Heart right ventricle (tissue), 16 donors: ENCODE measurements at regions of chr13 and their contacts with region 1.

Region 1: GRCh38 chr13:110915057-110915873 is at the start of gene ANKRD10:
- DNase-seq: peak; percentile 98 to 99
- ATAC-seq: peak; percentile 91 to 97 (median 93)
- H3K4me3 ChIP-seq: peak within 1 kb of the TSS; percentile 71 to 99 (median 92)
- H3K27ac ChIP-seq: peak within 1 kb of the TSS; percentile 97 to 100 (median 100)
- H3K4me1 ChIP-seq: peaks cover 6 to 57% (median 48%) of the 10 kb centered on the region in 9 donors
- H3K27me3 ChIP-seq: no peaks in the 10 kb centered on the region
- CTCF ChIP-seq: peak in 8 of 9 donors; percentile 80 to 100 (median 92)
- total RNA-seq, gene ANKRD10: 38.1 to 71.4 (median 49.0) TPM

Region 2: DNA sequence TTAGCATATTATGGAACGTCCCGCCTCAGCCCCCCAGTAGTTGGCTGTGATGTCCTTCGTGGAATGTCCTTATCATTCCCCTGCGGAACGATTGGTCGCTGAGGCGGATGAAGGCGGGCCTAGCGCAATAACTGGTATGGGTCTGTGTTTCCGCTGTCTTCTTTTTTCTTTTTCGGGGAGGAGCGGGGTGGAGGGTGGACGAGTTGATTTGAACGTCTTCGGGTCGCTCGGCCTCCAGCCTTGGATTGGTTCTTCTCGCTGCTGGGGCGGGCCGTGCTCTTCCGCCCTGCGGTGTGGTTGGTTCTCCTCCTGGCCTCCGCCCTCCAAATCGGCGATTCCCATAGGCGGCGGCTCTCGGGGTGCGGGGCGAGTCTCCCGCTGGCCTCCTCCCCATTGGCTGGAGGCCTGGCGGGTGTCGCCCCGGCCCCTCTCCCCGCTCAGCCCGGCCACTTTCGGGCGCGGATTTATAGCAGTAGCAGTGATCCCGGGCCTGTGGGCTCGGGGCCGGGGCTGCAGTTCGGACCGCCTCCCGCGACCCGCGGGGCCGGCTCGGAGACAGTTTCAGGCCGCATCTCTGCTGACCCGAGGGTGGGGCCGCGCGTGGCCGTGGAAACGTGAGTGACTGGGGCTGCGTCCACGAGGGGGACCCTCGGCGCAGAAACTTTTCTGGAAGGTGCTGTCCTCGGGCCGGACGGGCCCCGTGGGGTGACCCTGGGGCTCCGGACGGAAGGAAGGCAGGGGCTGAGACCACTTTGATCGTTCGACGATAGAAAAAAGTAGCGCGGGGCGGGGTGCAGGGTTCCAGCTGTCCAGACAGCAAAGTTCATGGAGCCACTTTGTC is 199.7 kb before region 1 on chr13:
- intact Hi-C with region 1: loop called in 7 of 10 experiments (anchors 2 to 10 kb)
- DNase-seq: peak; percentile 97 to 99
- ATAC-seq: peak; percentile 68 to 84 (median 81)
- H3K4me3 ChIP-seq: peak overlapping the region; percentile 79 to 98 (median 92)
- H3K27ac ChIP-seq: peak overlapping the region; percentile 17 to 100 (median 100)
- H3K4me1 ChIP-seq: peaks cover 4 to 33% (median 28%) of the 10 kb centered on the region in 9 donors
- H3K27me3 ChIP-seq: no peaks in the 10 kb centered on the region
- CTCF ChIP-seq: peak in 6 of 9 donors; percentile 9 to 55 (median 34)

Region 3: DNA sequence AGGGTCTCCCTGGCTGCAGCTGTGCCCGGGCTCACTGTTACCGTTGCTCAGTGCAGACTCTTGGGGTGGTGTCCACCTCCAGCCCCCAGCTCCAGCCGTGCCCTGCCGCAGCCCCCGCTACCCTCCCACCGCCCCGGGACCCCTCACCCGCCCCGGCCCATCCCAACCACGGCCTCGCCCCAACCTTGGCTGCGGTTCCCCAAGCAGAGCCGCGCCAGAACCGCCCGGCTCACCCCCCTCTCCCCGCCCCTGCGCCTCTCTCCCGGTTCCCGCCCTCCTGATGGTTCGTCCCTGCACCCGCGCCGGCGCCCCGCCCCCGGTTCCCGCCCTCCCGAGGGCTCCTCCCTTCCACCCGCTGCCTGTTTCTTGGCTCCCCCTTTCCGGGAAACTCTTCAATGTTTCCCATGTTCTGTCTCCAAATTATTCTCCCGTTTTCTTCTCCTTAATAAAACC is 40.7 kb before region 1 on chr13:
- intact Hi-C with region 1: loop called in 5 of 10 experiments (anchors 1 to 5 kb)
- DNase-seq: peak; percentile 89 to 92
- ATAC-seq: peak; percentile 73 to 88 (median 76)
- H3K4me3 ChIP-seq: peak overlapping the region in 9 of 10 donors; percentile 18 to 53 (median 47)
- H3K27ac ChIP-seq: peak overlapping the region in 3 of 10 donors; percentile 8 to 56 (median 44)
- H3K4me1 ChIP-seq: peaks cover 7 to 40% (median 25%) of the 10 kb centered on the region in 9 donors
- H3K27me3 ChIP-seq: peaks cover 0 to 6% (median 0%) of the 10 kb centered on the region in 7 donors
- CTCF ChIP-seq: no peak

Region 4: DNA sequence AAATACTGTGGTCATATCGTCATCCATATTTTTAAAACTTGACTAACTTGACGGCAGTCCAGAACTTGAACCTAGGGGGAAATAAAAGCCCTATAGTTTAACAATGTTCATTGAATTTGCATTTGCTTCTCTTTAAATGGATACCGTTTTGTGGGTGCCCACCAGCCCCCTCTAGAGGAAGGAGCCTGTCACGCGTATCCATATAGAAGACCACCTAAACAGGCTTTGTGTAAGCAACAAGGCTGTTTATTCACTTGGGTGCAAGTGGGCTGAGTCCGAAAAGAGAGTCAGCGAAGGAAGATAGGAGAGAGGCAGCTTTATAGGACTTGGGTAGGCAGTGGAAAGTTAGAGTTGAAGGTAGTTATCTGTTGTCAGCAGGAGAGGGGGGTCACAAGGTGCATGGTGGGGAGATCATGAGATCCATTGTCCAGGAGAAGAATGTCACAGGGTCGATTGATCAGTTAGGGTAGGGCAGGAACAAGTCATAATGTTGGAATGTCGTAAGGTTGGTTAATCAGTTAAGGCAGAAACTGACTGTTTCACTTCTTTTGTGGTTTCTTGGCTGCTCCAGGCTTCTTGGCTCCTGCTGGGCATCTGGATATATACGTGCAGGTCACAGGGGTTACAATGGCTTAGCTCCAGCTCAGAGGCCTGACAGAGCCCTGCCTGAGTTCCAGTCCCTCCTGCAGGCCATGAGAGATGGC is 42.1 kb after region 1 on chr13:
- intact Hi-C with region 1: no loop called
- DNase-seq: no peak
- ATAC-seq: no peak
- H3K4me3 ChIP-seq: no peak overlapping the region
- H3K27ac ChIP-seq: no peak overlapping the region
- H3K4me1 ChIP-seq: peaks cover 0 to 16% (median 0%) of the 10 kb centered on the region in 9 donors
- H3K27me3 ChIP-seq: no peaks in the 10 kb centered on the region
- CTCF ChIP-seq: peak in 2 of 9 donors; percentile 14 to 18

Region 5: GRCh38 chr13:111046590-111047141 is 131.4 kb after region 1 on chr13:
- intact Hi-C with region 1: loop called in 7 of 10 experiments (anchors 1 to 5 kb)
- DNase-seq: peak in 1 of 2 donors; percentile 50
- ATAC-seq: peak; percentile 11 to 69 (median 49)
- H3K4me3 ChIP-seq: no peak overlapping the region
- H3K27ac ChIP-seq: peak overlapping the region in 7 of 10 donors; percentile 14 to 79 (median 63)
- H3K4me1 ChIP-seq: peaks cover 0 to 21% (median 4%) of the 10 kb centered on the region in 9 donors
- H3K27me3 ChIP-seq: peaks cover 0 to 8% (median 0%) of the 10 kb centered on the region in 7 donors
- CTCF ChIP-seq: peak in 4 of 9 donors; percentile 12 to 46 (median 30)

Region 6: GRCh38 chr13:111228262-111229144 is 313.2 kb after region 1 on chr13:
- intact Hi-C with region 1: loop called in 2 of 10 experiments (anchors 10 kb)
- DNase-seq: no peak
- ATAC-seq: peak in 1 of 8 donors; percentile 19
- H3K4me3 ChIP-seq: no peak overlapping the region
- H3K27ac ChIP-seq: no peak overlapping the region
- H3K4me1 ChIP-seq: peaks cover 0 to 93% (median 47%) of the 10 kb centered on the region in 9 donors
- H3K27me3 ChIP-seq: no peaks in the 10 kb centered on the region
- CTCF ChIP-seq: no peak